ENCODE measurements at regions of chr2 and their contacts with region 1.

Region 1: DNA sequence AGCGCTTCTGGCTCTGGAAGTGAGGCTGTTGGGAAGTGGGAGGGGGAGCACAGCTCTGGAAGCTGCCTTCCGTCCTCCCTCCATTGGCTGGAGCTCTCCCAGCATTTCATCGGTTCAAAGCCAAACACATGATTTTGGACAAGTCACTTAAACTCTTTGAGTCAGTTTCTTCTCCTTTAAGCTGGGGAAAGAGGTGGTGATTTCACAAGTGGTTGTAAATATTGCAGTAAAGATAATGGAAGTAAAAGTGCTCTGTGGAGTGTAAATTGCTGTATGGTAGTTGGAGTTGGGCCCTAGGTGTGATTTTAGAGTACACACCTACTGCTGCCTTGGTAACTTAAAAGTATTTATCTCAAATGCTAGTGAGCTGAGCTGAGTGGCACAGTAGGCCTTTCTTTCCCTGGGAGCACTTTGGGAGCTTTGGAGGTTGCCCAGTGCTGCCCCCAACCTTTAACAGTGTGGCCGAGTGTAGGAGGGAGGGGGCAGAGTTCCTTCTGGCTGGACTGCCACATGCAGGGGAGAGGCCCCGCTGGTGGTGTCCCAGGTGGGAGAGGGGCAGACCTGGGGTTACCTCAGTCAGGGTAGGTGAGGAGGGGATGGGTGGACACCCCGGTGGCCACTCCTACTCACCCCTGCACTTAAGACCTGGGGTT is 54.7 kb downstream of the ASAP2 start:
- DNase-seq: no peak

Region 2: GRCh38 chr2:9112079-9112721 is 149.2 kb before region 1 on chr2:
- intact Hi-C with region 1: no loop called
- DNase-seq: no peak

Region 3: DNA sequence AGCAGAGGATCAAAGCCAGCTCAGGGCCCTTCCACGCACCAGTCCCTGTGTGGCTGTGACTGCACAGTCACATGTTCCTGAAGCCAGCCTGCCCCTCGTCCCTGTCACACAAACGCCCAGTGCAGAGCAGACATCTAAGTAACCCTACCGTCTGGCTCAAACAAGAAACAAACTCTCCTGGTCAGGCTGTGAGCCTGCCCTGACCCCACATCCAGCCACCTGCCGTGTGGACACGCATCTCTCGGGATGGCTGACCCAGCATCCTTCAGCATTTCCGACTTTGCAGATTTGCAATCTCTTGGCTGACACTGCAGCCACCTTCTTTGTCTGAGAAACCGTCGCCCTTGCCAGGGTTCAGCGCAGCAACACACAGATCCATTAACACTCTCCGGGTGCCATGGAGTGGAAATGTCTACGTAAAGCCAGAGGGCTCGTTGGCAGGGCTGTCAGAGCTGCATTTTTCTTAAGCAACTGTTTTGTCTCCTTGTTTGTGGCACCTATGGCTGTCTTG is 137.1 kb before region 1 on chr2:
- intact Hi-C with region 1: no loop called
- DNase-seq: no peak

Region 4: DNA sequence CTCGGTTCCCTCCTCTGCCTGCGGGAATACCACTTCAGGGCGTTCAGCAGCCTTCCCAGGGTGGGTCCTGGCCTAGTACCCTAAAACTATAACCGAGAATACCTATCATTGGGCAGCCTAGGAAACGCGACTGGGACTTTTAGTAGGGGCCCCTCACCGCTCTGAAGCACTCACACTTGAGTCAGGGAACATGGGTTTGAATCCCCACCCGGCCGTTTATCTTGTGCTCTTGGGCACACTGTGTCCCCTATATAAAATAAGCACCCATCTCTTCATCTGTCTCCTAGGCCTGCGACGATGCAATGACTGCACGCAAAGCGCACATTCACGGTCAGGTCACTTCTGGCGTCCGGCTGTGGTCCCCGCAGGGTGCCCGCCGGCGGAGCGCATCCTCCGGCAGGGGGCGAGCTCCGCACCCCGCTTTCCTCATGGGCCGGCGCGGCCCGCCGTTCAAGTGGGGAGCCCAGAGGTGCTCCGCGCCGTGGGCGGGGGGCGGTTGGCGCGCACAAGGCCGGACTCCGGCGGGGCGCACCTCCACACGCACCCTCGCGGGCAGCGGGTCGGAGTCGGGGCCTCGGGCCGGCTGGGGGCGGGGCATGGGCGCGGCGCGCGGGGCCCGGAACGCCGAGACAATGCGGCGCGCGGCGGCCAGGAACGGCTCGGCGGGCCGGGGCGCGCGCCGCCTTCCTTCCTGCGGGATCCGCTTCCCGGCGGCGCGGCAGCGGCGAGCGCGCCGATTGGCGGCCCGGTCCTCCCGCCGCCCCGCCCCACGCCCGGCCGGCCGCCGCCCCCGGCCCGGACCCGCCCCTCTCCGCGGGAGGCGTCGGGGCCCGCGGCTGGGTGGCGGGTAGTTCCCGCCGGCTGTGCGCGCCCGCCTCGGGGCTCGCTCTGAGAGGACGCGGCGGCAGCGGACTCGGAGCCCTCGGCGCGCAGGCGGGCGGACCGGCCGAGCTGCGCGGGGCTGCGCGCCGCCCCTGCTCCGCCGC is 55.1 kb before region 1 on chr2 and contains the start of gene ASAP2:
- intact Hi-C with region 1: loop called (anchors 5 kb)
- DNase-seq: peak; percentile 87
- total RNA-seq, gene ASAP2: 11.8 TPM

Region 5: GRCh38 chr2:9234680-9235387 is 26.5 kb before region 1 on chr2:
- intact Hi-C with region 1: loop called (anchors 2 kb)
- DNase-seq: no peak

Region 6: GRCh38 chr2:9310377-9310776 is 49.0 kb after region 1 on chr2:
- intact Hi-C with region 1: loop called (anchors 5 kb)
- DNase-seq: no peak

Region 7: GRCh38 chr2:9333591-9334171 is 72.3 kb after region 1 on chr2:
- intact Hi-C with region 1: loop called (anchors 5 kb)
- DNase-seq: no peak